ENCODE measurements at regions of chr16 and their contacts with region 1.

Region 1: DNA sequence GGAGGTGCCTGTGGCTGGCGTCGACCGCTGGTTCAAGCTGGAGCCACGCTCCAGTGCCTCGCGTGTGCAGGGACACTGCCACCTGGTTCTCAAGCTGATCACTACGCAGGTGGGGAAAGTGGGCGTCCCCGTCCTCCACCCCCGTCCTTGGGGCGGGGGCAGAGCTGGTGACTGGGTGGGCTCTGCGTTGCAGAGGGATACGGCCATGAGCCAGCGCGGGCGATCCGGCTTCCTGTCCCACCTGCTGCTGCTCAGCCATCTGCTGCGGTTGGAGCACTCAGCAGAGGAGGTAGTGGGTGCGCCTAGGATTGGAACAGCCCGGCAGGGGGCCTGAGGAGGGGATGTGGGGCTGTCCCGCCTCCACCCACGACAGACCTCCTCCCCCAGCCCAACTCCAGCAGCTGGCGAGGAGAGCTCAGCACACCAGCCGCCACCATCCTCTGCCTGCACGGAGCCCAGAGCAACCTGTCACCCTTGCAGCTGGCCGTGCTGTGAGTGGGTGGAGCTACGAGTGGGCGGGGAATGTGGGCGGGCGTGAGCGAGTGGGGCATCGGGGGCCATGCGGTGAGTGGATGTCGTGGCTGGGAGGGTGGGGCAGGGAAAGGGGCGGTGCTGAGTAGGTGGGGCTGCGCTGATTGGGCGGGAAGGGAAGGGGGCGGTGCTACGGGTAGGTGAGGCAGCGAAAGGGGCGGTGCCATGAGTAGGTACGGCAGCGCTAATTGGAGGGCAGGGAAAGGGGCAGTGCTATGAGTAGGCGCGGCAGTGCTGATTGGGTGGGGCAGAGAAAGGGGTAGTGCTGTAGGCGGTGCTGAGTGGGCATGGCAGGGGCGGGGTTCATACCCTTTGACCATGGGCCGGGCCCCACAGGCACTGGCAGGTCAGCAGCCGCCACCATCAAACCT is 8.9 kb downstream of the TSR3 start:
- DNase-seq: peak; percentile 85 to 97 (median 94)
- ATAC-seq: peak; percentile 97
- H3K4me3 ChIP-seq: peak overlapping the region; percentile 66
- H3K4me3 Mint-ChIP-seq: peak overlapping the region; percentile 60 to 86 (median 80)
- H3K27ac ChIP-seq: no peak overlapping the region
- H3K27ac Mint-ChIP-seq: peak overlapping the region in 8 of 9 donors; percentile 14 to 79 (median 45)
- H3K4me1 ChIP-seq: peaks cover 11 to 17% of the 10 kb centered on the region in 2 donors
- H3K4me1 Mint-ChIP-seq: peaks cover 7 to 18% (median 15%) of the 10 kb centered on the region in 7 donors
- H3K27me3 ChIP-seq: no peaks in the 10 kb centered on the region
- H3K27me3 Mint-ChIP-seq: no peaks in the 10 kb centered on the region

Region 2: DNA sequence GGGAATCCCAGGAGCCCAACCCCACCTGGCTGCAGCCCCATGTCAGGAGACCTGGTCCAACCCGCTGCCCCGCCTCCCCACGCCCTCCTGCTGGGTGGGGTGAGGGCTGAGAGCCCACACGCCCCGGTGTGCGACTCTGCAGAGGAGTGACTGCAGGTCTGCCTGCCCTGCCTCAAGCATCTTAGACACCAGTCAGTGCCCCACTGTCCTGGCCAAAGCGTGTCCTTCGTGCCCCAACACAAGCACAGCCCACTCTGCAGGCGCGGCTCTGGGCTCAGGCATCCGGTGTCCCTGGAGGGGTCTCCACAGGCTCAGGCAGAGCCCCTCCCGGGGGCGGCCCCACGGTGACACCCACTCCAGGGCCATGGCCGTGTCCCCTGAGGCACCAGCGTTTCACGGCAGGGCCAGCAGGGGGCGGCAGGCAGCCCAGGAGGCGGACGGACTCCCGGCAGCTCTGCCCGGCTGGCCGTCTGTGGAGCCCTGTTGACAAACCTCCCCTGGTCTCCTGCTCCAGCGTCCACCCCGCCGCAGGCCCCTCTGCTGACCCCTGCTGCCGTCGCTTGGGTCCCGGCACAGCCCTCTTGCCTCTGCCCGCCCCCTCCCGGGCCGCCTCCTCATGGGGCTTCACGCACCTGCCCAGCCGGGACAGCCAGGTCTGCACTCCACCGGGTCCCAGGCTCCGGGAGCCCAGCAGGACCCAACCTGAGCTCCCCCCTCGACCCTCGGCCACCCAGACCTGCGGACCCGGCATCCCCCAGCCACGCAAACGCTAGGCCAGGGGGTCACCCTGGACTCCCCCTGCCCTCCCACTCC is 41.9 kb before region 1 on chr16:
- CTCF ChIA-PET with region 1: interaction called, 3 read pairs
- POLR2A ChIA-PET with region 1: no interaction called
- intact Hi-C with region 1: loop called in 1 of 2 experiments (anchors 2 kb)
- DNase-seq: peak; percentile 43 to 83 (median 67)
- ATAC-seq: peak; percentile 82
- H3K4me3 ChIP-seq: no peak overlapping the region
- H3K4me3 Mint-ChIP-seq: peak overlapping the region in 1 of 10 donors; percentile 55
- H3K27ac ChIP-seq: no peak overlapping the region
- H3K27ac Mint-ChIP-seq: no peak overlapping the region
- H3K4me1 ChIP-seq: peaks cover under 1 to 14% of the 10 kb centered on the region in 2 donors
- H3K4me1 Mint-ChIP-seq: peaks cover 7 to 19% (median 9%) of the 10 kb centered on the region in 7 donors
- H3K27me3 ChIP-seq: no peaks in the 10 kb centered on the region
- H3K27me3 Mint-ChIP-seq: peaks cover 4 to 16% (median 5%) of the 10 kb centered on the region in 5 donors

Region 3: DNA sequence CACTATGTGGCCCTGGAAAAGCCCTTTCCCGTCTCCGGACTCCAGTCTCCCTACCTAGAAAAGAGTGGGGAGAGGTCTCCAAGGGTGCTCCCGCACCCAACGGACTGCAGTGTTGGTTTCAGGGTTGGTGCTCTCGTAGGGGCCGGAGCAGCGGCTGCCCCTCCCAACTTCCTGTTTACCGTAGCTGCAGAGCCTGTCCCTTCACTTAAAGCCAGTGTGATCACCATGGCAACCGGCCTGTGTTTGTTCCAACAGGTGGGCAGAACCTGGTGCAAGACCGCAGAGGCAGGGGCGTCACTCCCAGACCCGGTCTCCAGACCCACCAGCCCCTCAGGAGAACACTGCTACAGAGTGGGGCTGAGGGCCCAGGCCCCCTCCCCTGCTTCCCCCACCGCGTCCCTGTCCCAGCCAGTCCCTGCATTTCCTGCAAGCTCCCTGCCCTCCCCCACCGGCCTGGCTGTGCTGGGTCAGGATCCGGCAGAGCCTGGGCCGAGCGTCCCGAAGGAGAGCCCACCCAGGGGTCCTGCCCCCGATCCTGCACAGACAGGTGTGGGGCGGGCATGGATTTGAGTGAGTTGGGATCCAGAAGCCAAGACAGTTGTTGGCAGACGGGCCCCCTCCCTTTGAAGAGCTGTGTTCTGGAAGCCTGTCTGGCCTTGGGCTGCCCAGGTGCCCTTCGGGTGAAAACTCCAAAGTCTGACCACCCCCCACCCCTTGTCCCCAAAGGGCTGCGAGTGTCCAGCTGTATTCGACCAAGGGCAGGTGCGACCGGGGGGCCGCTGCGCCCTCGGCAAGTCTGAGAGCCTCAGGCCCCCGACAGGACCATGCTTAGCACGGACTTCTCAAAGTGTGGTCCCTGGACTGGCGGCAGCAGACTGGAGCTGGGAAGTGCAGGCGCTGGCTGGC is 10.8 kb before region 1 on chr16:
- CTCF ChIA-PET with region 1: no interaction called
- POLR2A ChIA-PET with region 1: interaction called, 3 read pairs
- intact Hi-C with region 1: loop called in 1 of 2 experiments (anchors 1 kb)
- DNase-seq: peak in 2 of 9 donors; percentile 16 to 49
- ATAC-seq: peak; percentile 61
- H3K4me3 ChIP-seq: peak overlapping the region; percentile 8
- H3K4me3 Mint-ChIP-seq: peak overlapping the region in 8 of 10 donors; percentile 64 to 80 (median 69)
- H3K27ac ChIP-seq: no peak overlapping the region
- H3K27ac Mint-ChIP-seq: peak overlapping the region in 2 of 9 donors; percentile 36 to 77
- H3K4me1 ChIP-seq: peaks cover 14 to 27% of the 10 kb centered on the region in 2 donors
- H3K4me1 Mint-ChIP-seq: peaks cover 0 to 18% (median 12%) of the 10 kb centered on the region in 7 donors
- H3K27me3 ChIP-seq: peaks cover 0 to 16% of the 10 kb centered on the region in 2 donors
- H3K27me3 Mint-ChIP-seq: peaks cover 0 to 36% (median 14%) of the 10 kb centered on the region in 5 donors